ENCODE measurements at regions of chr2 and their contacts with region 1.

Region 1: GRCh38 chr2:146927080-146927711 is 917.6 kb upstream of the ACVR2A start:
- DNase-seq: no peak
- H3K4me3 ChIP-seq: no peak overlapping the region
- H3K27me3 ChIP-seq: no peaks in the 10 kb centered on the region
- CTCF ChIP-seq: peak; percentile 76

Region 2: DNA sequence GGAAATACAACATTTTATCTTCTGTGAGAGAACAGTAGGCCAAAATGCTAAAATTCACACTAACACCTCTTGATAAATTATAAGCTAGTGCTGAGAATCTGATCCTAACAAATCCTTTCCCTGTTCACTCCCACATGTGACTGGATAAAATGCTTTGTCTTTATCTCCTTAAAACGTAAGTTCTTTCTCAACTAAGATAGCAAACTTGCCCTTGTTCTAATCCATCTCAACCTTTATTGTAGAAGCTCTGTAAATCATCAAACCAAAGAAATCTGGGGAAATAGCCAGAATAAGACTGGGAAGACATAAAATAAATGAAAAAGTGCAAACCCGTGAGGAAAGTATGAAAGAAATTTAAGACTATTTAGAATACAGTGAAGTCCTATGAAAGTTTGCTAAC is 140.8 kb before region 1 on chr2:
- CTCF ChIA-PET with region 1: no interaction called
- POLR2A ChIA-PET with region 1: no interaction called
- DNase-seq: no peak
- H3K4me3 ChIP-seq: no peak overlapping the region
- H3K27me3 ChIP-seq: no peaks in the 10 kb centered on the region
- CTCF ChIP-seq: no peak

Region 3: DNA sequence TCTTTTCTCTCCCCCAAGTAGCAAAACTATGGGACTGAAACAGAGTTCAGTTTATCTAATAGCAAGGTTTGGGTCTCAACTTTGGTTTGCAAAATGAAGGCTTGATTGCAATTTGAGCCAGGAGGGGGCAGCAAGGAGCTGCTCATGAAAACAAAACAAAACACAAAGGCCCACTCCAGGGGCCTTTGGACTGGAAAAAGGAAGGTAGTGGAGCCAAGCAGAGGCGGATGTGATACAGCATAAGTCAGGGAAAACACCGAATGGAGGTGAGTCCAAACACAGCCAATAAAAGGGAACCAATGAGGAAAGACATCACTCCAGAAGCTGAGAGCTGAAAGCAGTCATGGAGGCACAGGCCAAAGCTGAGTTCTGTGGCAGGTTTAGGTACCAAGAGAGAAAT is 117.9 kb after region 1 on chr2:
- CTCF ChIA-PET with region 1: interaction called, 11 read pairs
- POLR2A ChIA-PET with region 1: no interaction called
- DNase-seq: no peak
- H3K4me3 ChIP-seq: no peak overlapping the region
- H3K27me3 ChIP-seq: no peaks in the 10 kb centered on the region
- CTCF ChIP-seq: peak; percentile 65

Region 4: GRCh38 chr2:147910990-147911473 is 983.8 kb after region 1 on chr2:
- CTCF ChIA-PET with region 1: interaction called, 11 read pairs
- POLR2A ChIA-PET with region 1: no interaction called
- DNase-seq: no peak
- H3K4me3 ChIP-seq: no peak overlapping the region
- H3K27me3 ChIP-seq: no peaks in the 10 kb centered on the region
- CTCF ChIP-seq: peak; percentile 62